Mammary epithelial cell (primary cell): ENCODE measurements at regions of chr18 and their contacts with region 1.

Region 1: GRCh38 chr18:59402432-59403090 is 43.5 kb upstream of the LMAN1 start:
- DNase-seq: peak; percentile 81
- H3K4me3 ChIP-seq: no peak overlapping the region
- H3K27ac ChIP-seq: no peak overlapping the region
- H3K4me1 ChIP-seq: no peaks in the 10 kb centered on the region
- H3K27me3 ChIP-seq: no peaks in the 10 kb centered on the region
- CTCF ChIP-seq: peak; percentile 95 to 99

Region 2: DNA sequence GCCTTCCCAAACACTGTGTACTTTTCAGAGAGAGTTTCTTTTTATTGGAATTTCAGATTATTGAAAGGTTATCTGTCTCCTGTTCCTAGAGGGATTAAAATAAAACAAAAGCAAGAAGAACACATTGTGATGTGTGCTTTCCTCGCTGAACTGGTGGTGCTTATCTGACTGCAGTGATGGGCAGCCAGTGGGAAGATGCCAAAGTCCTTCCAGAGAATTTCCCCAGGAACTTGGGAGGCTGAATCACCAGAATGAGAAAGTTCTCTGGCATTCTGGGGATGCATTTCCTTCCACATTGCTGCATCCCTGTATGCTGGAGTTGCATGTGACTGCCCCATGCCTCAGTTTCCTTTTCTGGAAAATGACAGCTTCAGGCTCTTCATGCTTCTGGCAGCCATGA is 316.8 kb before region 1 on chr18:
- CTCF ChIA-PET with region 1: no interaction called
- dilution Hi-C with region 1: no loop called
- in situ Hi-C with region 1: no loop called
- intact Hi-C with region 1: loop called (anchors 2 kb)
- DNase-seq: no peak
- H3K4me3 ChIP-seq: no peak overlapping the region
- H3K27ac ChIP-seq: no peak overlapping the region
- H3K4me1 ChIP-seq: no peaks in the 10 kb centered on the region
- H3K27me3 ChIP-seq: no peaks in the 10 kb centered on the region
- CTCF ChIP-seq: no peak

Region 3: GRCh38 chr18:59139371-59140298 is 262.9 kb before region 1 on chr18 and contains the start of gene SEC11C:
- CTCF ChIA-PET with region 1: no interaction called
- dilution Hi-C with region 1: no loop called
- in situ Hi-C with region 1: no loop called
- intact Hi-C with region 1: loop called (anchors 5 kb)
- DNase-seq: peak; percentile 96
- H3K4me3 ChIP-seq: peak within 1 kb of the TSS; percentile 82 to 88 (median 85)
- H3K27ac ChIP-seq: peak within 1 kb of the TSS; percentile 96
- H3K4me1 ChIP-seq: peaks cover 6% of the 10 kb centered on the region
- H3K27me3 ChIP-seq: peaks cover 5% of the 10 kb centered on the region
- CTCF ChIP-seq: no peak
- total RNA-seq, gene SEC11C: 13.7 to 47.1 TPM

Region 4: GRCh38 chr18:59200787-59201186 is 201.8 kb before region 1 on chr18:
- CTCF ChIA-PET with region 1: no interaction called
- dilution Hi-C with region 1: no loop called
- in situ Hi-C with region 1: no loop called
- intact Hi-C with region 1: loop called (anchors 2 kb)
- DNase-seq: peak; percentile 15
- H3K4me3 ChIP-seq: no peak overlapping the region
- H3K27ac ChIP-seq: no peak overlapping the region
- H3K4me1 ChIP-seq: no peaks in the 10 kb centered on the region
- H3K27me3 ChIP-seq: peaks cover 4% of the 10 kb centered on the region
- CTCF ChIP-seq: peak; percentile 25 to 44

Region 5: GRCh38 chr18:59208602-59209125 is 193.9 kb before region 1 on chr18:
- CTCF ChIA-PET with region 1: no interaction called
- dilution Hi-C with region 1: no loop called
- in situ Hi-C with region 1: no loop called
- intact Hi-C with region 1: loop called (anchors 2 kb)
- DNase-seq: peak; percentile 76
- H3K4me3 ChIP-seq: no peak overlapping the region
- H3K27ac ChIP-seq: no peak overlapping the region
- H3K4me1 ChIP-seq: peaks cover 13% of the 10 kb centered on the region
- H3K27me3 ChIP-seq: no peaks in the 10 kb centered on the region
- CTCF ChIP-seq: no peak

Region 6: DNA sequence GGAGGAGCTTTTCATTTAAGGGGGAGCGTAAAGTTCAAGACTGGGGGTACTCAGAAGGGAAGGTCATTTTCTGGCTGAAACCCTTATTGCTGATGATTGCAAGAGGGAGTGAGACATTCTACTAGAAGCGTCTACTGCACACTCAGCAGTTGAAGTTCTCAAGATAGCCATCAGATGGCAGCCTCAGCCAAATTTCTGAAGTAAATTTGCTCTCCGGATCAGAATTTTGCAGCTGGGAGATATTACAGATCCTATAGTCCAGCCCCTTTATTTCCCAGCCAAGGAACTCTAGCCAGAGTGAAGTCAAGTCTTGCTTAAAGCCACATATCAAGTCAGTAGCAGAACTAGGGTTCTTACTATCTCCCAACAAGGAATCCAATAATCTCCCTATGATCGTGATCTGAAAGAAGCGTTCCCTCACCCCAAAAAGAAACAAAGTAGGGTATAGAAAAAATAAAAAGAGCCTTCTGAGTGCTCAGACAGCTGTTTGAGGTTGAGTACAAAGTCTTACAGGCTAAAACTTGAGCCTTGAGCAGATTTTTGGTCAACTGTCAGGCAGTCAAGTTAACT is 153.3 kb before region 1 on chr18:
- CTCF ChIA-PET with region 1: interaction called, 5 read pairs
- dilution Hi-C with region 1: no loop called
- in situ Hi-C with region 1: loop called in 1 of 2 experiments (anchors 5 kb)
- intact Hi-C with region 1: loop called (anchors 2 kb)
- DNase-seq: peak; percentile 52
- H3K4me3 ChIP-seq: no peak overlapping the region
- H3K27ac ChIP-seq: no peak overlapping the region
- H3K4me1 ChIP-seq: no peaks in the 10 kb centered on the region
- H3K27me3 ChIP-seq: peaks cover 3% of the 10 kb centered on the region
- CTCF ChIP-seq: peak; percentile 73 to 84

Region 7: GRCh38 chr18:59268721-59269562 is 133.6 kb before region 1 on chr18:
- CTCF ChIA-PET with region 1: no interaction called
- dilution Hi-C with region 1: no loop called
- in situ Hi-C with region 1: no loop called
- intact Hi-C with region 1: loop called (anchors 5 kb)
- DNase-seq: no peak
- H3K4me3 ChIP-seq: peak overlapping the region in 2 of 3 experiments; percentile 29 to 30
- H3K27ac ChIP-seq: no peak overlapping the region
- H3K4me1 ChIP-seq: peaks cover 44% of the 10 kb centered on the region
- H3K27me3 ChIP-seq: peaks cover 96% of the 10 kb centered on the region
- CTCF ChIP-seq: peak in 1 of 2 donors; percentile 10